ENCODE measurements at regions of chr2 and their contacts with region 1.

Region 1: DNA sequence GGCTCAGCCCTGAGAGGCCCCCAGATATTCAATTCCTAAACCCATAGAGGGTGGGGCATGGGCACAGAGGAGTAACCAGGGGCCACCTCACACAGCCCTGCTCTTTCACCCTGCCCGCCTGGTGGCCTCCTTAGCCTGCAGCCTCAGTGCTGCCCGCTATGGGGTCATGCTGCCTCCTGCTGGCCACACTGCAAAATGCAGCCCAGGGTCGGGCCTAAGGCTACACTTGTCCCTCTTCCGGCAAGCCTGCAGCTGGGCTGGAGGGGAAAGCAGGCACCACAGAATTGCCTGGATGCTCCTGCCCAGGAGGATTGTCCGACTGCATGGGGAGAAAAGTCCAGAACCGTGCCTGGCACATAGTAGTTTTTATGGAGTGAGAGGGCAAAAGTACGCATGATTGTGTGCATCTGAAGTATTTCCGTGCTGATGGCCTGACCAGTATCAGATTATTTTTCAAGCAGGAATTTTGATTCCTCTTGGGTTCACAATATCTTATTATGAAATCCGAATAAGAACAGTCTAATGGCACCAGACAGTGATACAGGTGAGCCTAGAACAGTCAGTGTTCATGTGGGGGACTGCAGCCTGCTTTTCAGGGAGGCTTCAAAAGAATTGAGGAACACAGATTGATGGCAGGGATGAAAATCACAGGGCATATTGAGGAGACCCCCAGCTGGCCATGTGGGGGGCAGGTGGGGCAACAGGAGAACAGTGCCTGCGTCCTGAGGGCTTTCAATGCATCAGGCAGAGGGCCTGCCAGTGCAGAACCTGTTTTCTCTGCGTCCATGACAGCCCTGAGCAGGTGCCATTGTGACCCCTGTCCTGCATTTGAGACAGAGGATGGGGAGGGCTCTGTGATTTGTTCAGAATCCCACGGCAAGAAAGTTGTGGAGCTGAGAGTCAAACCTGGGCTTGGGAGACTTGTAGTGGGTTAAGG is 51.2 kb upstream of the ALPP start:
- DNase-seq: peak; percentile 92
- H3K4me3 Mint-ChIP-seq: no peak overlapping the region
- H3K27ac Mint-ChIP-seq: no peak overlapping the region
- H3K4me1 Mint-ChIP-seq: peaks cover 11% of the 10 kb centered on the region
- H3K27me3 Mint-ChIP-seq: no peaks in the 10 kb centered on the region

Region 2: GRCh38 chr2:231900486-231900942 is 426.9 kb before region 1 on chr2:
- CTCF ChIA-PET with region 1: interaction called, 10 read pairs
- intact Hi-C with region 1: no loop called
- DNase-seq: peak; percentile 66
- H3K4me3 Mint-ChIP-seq: no peak overlapping the region
- H3K27ac Mint-ChIP-seq: no peak overlapping the region
- H3K4me1 Mint-ChIP-seq: no peaks in the 10 kb centered on the region
- H3K27me3 Mint-ChIP-seq: no peaks in the 10 kb centered on the region

Region 3: DNA sequence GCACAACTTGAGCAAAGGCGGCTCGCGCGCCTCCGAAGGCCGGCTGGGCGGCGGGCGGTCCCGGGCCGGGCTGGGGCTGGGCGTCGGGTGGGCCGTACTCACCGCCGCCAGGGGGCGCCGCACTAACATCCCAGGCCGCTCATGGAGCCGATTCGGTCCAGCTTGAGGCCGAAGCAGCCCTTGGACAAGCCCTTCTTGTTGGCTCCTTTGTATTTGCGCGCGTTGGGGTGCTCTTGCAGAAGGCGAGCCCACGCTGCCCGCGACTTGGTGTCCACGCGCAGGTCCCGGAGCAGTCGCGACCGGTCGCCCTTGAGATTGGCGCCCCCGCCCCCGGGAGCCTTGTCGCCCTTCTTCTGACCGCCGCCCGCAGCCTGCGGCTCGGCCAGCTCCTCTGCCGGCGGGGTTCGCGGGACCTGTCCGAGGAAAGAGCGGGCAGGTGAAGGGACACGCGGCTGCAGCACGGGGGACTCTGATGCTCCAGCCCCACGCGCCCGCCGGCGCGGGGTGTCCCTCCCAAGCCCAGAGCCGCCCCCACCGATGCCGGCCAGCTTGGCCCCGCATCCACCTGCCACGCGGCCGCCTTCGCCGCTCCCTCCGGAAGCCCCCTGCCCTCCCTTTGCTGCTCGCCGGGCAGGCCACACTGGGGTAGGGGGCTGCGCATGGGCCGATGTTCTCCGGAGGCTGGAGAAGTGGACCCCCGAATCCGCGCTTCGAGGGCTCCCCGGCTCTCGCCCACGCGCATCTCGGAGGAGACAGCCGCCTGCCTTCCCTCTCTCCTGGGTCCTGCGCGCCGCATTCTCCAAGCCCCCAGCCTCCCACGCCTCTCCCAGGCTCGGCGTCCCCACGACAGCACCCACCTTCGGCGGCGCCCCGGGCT is 401.8 kb before region 1 on chr2:
- CTCF ChIA-PET with region 1: interaction called, 29 read pairs
- intact Hi-C with region 1: loop called (anchors 1 kb)
- DNase-seq: peak; percentile 72
- H3K4me3 Mint-ChIP-seq: peak overlapping the region; percentile 73
- H3K27ac Mint-ChIP-seq: no peak overlapping the region
- H3K4me1 Mint-ChIP-seq: peaks cover 9% of the 10 kb centered on the region
- H3K27me3 Mint-ChIP-seq: peaks cover 44% of the 10 kb centered on the region

Region 4: DNA sequence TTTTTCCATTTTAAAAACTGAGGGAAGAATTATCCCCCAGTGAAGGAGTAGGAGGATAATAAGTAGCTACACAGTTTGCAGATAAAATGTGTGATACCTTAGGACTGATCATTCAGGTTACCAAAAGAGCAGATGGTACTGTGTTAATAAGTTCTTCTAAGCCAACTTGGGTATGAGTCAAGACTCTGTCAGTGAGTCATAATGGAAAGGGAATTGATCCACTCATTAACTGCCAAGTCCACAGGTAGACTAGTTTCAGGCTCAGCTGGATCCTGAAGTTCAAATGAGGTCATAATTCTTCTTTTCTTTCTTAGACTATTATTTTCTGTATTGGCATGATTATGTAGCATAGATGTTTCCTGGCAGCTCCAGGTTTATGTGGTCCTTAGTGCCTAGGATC is 91.2 kb before region 1 on chr2:
- CTCF ChIA-PET with region 1: interaction called, 10 read pairs
- intact Hi-C with region 1: no loop called
- DNase-seq: no peak
- H3K4me3 Mint-ChIP-seq: no peak overlapping the region
- H3K27ac Mint-ChIP-seq: no peak overlapping the region
- H3K4me1 Mint-ChIP-seq: peaks cover 74% of the 10 kb centered on the region
- H3K27me3 Mint-ChIP-seq: no peaks in the 10 kb centered on the region

Region 5: GRCh38 chr2:232310121-232310520 is 17.3 kb before region 1 on chr2:
- CTCF ChIA-PET with region 1: interaction called, 66 read pairs
- intact Hi-C with region 1: no loop called
- DNase-seq: peak; percentile 71
- H3K4me3 Mint-ChIP-seq: peak overlapping the region; percentile 26
- H3K27ac Mint-ChIP-seq: peak overlapping the region; percentile 55
- H3K4me1 Mint-ChIP-seq: peaks cover 55% of the 10 kb centered on the region
- H3K27me3 Mint-ChIP-seq: no peaks in the 10 kb centered on the region

Region 6: GRCh38 chr2:232365621-232366321 is 38.4 kb after region 1 on chr2:
- CTCF ChIA-PET with region 1: no interaction called
- intact Hi-C with region 1: no loop called
- DNase-seq: peak; percentile 23
- H3K4me3 Mint-ChIP-seq: no peak overlapping the region
- H3K27ac Mint-ChIP-seq: no peak overlapping the region
- H3K4me1 Mint-ChIP-seq: peaks cover 24% of the 10 kb centered on the region
- H3K27me3 Mint-ChIP-seq: no peaks in the 10 kb centered on the region

Region 7: DNA sequence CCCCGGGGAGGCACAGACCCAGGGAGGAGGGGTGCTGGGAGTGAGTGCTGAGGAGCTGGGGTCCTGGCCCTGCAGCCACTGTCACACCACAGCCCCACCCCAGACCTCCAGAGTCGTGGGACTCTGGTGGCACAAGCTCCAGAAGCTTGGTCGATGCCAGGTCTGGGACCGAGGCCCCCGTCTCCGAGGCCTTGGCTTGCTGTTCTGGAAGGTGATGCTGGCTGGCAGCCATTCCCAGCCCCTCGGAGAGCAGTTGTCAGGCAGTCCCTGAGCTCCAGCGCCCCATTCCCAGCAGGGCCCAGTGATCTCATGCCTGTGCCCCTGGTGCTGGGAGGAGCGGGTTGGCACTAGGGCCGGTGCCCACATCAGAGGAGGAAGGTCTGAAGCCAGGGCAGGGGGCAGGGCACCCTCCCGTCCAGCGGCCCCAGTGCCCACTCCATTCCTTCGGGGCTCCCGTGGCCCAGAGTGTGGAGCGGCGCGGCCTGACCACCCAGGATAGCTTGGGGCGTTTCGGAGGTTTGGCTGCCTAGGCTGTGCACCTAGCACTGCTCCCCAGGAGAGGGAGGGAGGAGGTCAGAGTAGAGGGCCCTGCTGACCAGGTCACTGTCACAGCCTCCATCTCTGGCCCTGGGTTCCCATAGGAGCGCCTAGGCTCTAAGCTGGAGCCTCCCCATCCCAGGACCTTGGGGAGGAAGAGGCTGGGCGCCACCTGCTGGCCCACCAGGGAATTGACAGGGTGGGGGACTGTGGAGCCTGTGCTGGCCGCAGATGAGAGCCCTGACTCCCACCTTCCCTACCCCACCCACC is 111.8 kb after region 1 on chr2:
- CTCF ChIA-PET with region 1: interaction called, 4 read pairs
- intact Hi-C with region 1: loop called (anchors 2 kb)
- DNase-seq: peak; percentile 54
- H3K4me3 Mint-ChIP-seq: no peak overlapping the region
- H3K27ac Mint-ChIP-seq: no peak overlapping the region
- H3K4me1 Mint-ChIP-seq: peaks cover 6% of the 10 kb centered on the region
- H3K27me3 Mint-ChIP-seq: no peaks in the 10 kb centered on the region